ENCODE measurements at regions of chr2 and their contacts with region 1.

Region 1: DNA sequence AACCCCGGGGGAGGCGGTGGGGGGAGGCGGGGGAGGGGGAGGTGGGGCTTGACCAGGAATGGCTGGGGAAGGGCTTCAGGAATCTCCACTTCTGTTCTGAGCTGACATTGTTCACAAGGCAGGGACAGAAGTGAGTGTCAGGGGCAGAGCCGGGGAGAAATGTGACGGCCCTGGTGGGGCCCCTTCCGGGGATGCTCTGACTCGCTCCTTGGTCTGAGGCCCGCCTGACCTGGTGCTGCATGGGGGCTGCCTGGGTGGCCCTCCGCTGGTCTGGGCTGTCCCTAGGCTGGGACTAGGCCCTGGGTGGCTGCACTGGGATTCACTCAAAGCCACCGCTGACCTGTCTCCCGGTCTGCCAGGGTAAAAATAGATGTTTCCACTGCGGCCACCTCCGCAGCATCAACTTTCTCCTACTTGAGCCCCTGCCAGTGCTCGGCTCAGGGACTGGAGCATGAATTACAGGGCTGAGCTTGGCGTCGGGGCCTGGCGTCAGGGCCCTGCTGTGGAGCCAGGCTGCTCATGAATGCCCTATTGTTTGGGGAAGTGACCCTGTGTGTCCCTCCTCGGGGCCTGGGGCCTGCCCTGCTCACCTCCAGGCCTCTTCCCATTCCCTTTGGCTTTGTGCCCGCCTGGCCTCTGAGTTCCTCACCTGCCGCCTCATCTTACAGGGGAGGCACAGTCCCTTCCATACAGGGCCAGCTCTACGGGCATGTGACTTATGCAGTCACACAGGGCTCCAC is 247.5 kb downstream of the DYSF start:
- DNase-seq: peak; percentile 84 to 93
- ATAC-seq: peak; percentile 85
- H3K4me3 ChIP-seq: no peak overlapping the region
- H3K27ac ChIP-seq: peak overlapping the region in 1 of 2 donors; percentile 69
- H3K4me1 ChIP-seq: no peaks in the 10 kb centered on the region
- H3K27me3 ChIP-seq: no peaks in the 10 kb centered on the region

Region 2: GRCh38 chr2:71614976-71615766 is 85.7 kb before region 1 on chr2:
- intact Hi-C with region 1: loop called (anchors 5 kb)
- DNase-seq: peak; percentile 89 to 92
- ATAC-seq: peak; percentile 86
- H3K4me3 ChIP-seq: no peak overlapping the region
- H3K27ac ChIP-seq: peak overlapping the region; percentile 45 to 73
- H3K4me1 ChIP-seq: peaks cover 0 to 3% of the 10 kb centered on the region in 2 donors
- H3K27me3 ChIP-seq: no peaks in the 10 kb centered on the region

Region 3: DNA sequence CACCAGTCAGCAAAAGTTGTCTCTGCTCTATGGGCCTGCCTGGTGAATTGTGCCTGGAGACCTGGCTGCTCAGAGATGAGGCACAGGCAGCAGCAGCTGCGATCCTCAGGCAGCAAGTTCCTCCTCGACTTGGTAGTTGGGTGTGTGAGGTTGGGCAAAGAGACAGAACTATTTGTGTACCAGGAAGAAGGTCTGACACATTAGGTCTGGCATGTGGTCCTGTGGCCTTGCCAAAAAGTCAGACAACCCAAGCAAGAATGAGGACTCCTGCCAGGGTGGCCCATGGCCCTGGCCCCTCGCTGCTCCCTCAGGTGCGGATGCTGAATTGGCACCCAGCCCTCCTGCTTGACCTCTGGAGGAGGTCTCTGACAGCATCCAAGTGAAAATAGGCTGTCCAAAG is 54.8 kb before region 1 on chr2:
- intact Hi-C with region 1: loop called in 1 of 2 experiments (anchors 5 kb)
- DNase-seq: peak; percentile 85 to 89
- ATAC-seq: peak; percentile 60
- H3K4me3 ChIP-seq: no peak overlapping the region
- H3K27ac ChIP-seq: peak overlapping the region in 1 of 2 donors; percentile 49
- H3K4me1 ChIP-seq: peaks cover 3% of the 10 kb centered on the region in 2 donors
- H3K27me3 ChIP-seq: no peaks in the 10 kb centered on the region

Region 4: GRCh38 chr2:71675296-71675695 is 25.5 kb before region 1 on chr2:
- intact Hi-C with region 1: no loop called
- DNase-seq: peak in 1 of 2 donors; percentile 48
- ATAC-seq: no peak
- H3K4me3 ChIP-seq: no peak overlapping the region
- H3K27ac ChIP-seq: no peak overlapping the region
- H3K4me1 ChIP-seq: no peaks in the 10 kb centered on the region
- H3K27me3 ChIP-seq: no peaks in the 10 kb centered on the region

Region 5: DNA sequence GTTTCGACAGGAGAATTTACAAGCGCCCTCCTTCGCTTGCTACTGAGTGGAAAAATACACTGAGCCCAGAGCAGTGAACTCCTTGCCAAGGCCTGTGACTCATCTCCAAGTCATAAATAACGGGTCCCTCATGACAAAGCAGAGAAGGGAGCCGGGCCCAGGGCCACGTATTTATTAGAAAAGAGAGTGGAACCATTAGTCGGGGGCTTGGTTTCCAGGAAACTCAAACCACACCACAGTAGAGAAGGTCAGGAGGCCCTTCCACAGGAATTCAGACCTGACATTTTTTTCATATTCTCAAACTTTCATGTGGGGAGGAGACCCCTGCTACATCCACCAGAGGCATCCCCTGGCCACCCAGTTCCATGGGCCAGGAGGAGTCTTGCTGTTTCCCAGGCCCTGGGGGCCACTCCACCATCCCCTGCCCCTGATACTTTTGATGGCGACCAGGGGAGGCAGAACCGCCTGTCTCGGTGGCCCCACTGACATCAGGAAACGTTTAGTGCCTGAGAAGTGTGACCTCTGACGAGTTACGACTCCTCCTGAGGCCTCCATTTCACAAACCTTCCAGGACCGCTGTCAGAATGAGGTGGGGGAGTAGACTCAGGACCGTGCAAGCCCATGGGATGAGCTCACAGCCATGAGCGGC is 42.2 kb after region 1 on chr2:
- intact Hi-C with region 1: loop called (anchors 5 kb)
- DNase-seq: peak; percentile 88
- ATAC-seq: peak; percentile 88
- H3K4me3 ChIP-seq: no peak overlapping the region
- H3K27ac ChIP-seq: peak overlapping the region in 1 of 2 donors; percentile 22
- H3K4me1 ChIP-seq: no peaks in the 10 kb centered on the region
- H3K27me3 ChIP-seq: no peaks in the 10 kb centered on the region